ENCODE measurements at regions of chrX and their contacts with region 1.

Region 1: DNA sequence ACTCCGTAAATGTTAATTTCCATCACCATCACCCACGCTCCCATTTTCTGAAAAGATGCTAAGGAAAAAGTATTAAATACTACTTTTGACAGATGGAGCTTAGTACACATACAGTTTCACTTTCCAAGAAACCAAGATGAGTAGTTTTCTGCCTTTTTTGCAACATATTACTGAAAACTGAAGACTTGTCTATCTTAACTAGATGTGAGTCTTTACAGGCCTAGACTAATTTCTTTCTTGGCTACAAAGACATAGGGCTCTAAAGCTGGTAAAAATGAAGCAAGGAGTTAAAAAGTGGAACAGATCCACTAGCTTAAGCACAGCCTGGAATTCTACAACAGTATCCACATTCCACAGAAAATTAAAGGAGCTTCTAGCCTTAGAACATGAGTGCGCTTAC is 68.2 kb downstream of the ATP11C start:
- DNase-seq: no peak
- ATAC-seq: no peak
- H3K4me3 Mint-ChIP-seq: no peak overlapping the region
- H3K27ac Mint-ChIP-seq: no peak overlapping the region
- H3K4me1 Mint-ChIP-seq: peaks cover 12% of the 10 kb centered on the region
- H3K27me3 Mint-ChIP-seq: no peaks in the 10 kb centered on the region
- CTCF ChIP-seq: no peak

Region 2: DNA sequence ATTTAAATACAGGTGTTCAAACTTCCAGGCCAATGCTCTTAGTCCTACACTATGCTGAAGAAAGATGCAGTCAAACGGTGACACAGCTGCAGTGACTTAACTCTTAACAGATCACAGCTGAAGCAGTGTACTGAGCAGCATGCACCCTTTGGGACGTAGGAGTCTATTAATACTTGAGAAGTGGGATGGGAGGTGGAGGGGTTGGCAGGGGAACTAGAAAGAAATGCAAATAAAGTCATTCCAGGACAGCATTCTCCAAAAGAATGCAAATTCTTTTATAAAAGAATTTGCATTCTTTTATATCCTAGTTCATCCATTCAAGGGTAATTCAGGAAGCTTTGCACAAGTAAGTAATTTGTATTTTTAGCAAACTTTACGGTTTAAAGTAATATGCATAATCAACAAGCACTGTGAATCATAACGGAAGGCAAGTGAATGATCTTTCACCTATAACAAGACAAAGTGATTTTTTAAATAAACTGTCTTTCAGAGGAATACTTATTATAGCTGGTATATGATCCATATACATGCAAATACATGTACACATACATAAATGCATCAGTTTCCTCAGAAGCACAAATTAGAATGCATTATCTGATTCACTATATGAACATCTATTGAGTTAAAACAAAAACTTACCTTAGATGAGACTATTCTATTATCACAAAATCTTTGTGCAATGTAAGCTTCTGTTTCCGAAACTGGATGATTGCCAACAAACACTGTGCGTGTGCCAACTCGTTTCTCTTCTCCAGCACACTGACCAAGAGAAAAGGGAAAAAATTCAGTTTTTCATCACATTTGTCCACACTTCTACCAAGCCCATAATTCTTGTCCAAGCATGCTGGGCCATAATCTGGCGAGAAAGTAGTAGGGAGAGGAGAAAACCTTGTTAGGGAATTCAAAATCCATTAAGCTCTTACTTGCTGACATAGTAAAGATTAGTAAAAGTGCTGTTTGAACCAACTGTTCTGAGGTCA is 38.3 kb before region 1 on chrX:
- CTCF ChIA-PET with region 1: no interaction called
- POLR2A ChIA-PET with region 1: no interaction called
- intact Hi-C with region 1: loop called (anchors 5 kb)
- DNase-seq: no peak
- ATAC-seq: no peak
- H3K4me3 Mint-ChIP-seq: no peak overlapping the region
- H3K27ac Mint-ChIP-seq: no peak overlapping the region
- H3K4me1 Mint-ChIP-seq: peaks cover 11% of the 10 kb centered on the region
- H3K27me3 Mint-ChIP-seq: no peaks in the 10 kb centered on the region
- CTCF ChIP-seq: no peak

Region 3: DNA sequence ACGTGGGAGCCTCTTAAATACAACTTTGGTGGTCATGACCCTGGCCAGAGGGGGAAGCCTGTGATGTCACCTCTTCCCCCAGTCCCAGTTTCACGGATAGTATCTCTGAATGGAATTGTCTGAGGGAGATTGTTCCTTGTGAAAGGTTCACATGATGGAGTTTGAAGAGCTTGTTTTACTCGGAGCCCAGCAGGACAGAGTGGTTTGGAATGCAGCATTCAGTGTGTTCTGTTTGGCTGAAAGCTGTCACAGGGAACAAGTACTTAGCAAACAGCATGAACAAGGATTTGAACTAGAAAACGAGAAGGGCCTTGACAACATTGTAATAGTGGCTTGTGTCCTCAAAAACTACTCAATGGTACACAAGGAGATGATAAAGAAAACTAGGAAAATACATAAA is 234.6 kb after region 1 on chrX:
- CTCF ChIA-PET with region 1: no interaction called
- POLR2A ChIA-PET with region 1: no interaction called
- intact Hi-C with region 1: no loop called
- DNase-seq: no peak
- ATAC-seq: no peak
- H3K4me3 Mint-ChIP-seq: no peak overlapping the region
- H3K27ac Mint-ChIP-seq: no peak overlapping the region
- H3K4me1 Mint-ChIP-seq: no peaks in the 10 kb centered on the region
- H3K27me3 Mint-ChIP-seq: peaks cover 5% of the 10 kb centered on the region
- CTCF ChIP-seq: no peak